ENCODE measurements at regions of chr3 and their contacts with region 1.

Region 1: GRCh38 chr3:20511863-20512505 is 326.0 kb upstream of the SGO1 start:
- DNase-seq: peak; percentile 51
- H3K4me3 ChIP-seq: no peak overlapping the region
- H3K27ac ChIP-seq: no peak overlapping the region
- H3K4me1 ChIP-seq: no peaks in the 10 kb centered on the region
- H3K27me3 ChIP-seq: no peaks in the 10 kb centered on the region
- CTCF ChIP-seq: peak; percentile 35 to 40
- POLR2A ChIP-seq: no peak

Region 2: DNA sequence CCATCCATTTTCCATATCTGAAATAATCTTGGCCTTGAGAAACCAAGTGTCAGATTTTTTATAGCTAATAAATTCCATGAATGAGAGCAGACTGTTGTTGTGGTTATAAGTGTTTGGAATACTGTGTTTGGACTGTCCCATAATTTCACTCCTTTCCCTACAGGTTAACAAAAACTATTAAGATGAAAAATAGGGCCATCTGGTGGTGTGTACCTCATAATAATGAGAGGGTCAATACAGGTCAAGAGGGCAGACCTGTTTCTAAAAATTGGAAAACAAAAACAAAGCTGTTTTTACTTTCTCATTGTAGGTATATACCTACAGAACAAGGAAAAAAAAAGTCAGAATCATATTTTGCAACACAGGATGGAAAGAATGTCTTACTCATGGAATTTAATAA is 227.8 kb after region 1 on chr3:
- CTCF ChIA-PET with region 1: interaction called, 3 read pairs
- POLR2A ChIA-PET with region 1: no interaction called
- dilution Hi-C with region 1: no loop called
- intact Hi-C with region 1: loop called (anchors 5 kb)
- DNase-seq: peak; percentile 1
- H3K4me3 ChIP-seq: no peak overlapping the region
- H3K27ac ChIP-seq: no peak overlapping the region
- H3K4me1 ChIP-seq: no peaks in the 10 kb centered on the region
- H3K27me3 ChIP-seq: no peaks in the 10 kb centered on the region
- CTCF ChIP-seq: no peak
- POLR2A ChIP-seq: no peak

Region 3: DNA sequence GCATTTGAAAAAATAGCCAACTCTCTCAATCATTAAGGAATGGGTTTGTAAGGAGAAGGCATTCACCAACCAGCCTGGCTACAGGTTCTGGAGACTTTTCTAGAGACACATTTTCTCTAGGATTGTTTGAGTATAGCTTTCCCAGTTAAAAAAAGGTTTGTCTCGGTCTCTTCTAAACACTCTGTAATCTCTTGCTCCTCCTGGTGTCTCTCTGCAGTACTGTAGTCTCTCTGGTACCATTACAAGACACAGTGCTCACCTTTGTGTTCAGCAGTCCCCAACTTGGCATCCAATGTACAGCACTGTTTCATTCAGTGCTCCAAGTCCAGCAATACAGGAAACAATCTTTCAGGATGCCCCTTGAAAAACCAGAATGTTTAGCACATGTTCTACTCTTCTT is 704.6 kb after region 1 on chr3:
- CTCF ChIA-PET with region 1: no interaction called
- POLR2A ChIA-PET with region 1: no interaction called
- dilution Hi-C with region 1: no loop called
- intact Hi-C with region 1: loop called (anchors 5 kb)
- DNase-seq: no peak
- H3K4me3 ChIP-seq: no peak overlapping the region
- H3K27ac ChIP-seq: no peak overlapping the region
- H3K4me1 ChIP-seq: no peaks in the 10 kb centered on the region
- H3K27me3 ChIP-seq: no peaks in the 10 kb centered on the region
- CTCF ChIP-seq: no peak
- POLR2A ChIP-seq: no peak

Region 4: GRCh38 chr3:21484057-21484827 is 972.3 kb after region 1 on chr3:
- CTCF ChIA-PET with region 1: interaction called, 6 read pairs
- POLR2A ChIA-PET with region 1: no interaction called
- dilution Hi-C with region 1: no loop called
- intact Hi-C with region 1: loop called (anchors 1 kb)
- DNase-seq: peak; percentile 61
- H3K4me3 ChIP-seq: no peak overlapping the region
- H3K27ac ChIP-seq: no peak overlapping the region
- H3K4me1 ChIP-seq: no peaks in the 10 kb centered on the region
- H3K27me3 ChIP-seq: no peaks in the 10 kb centered on the region
- CTCF ChIP-seq: peak; percentile 55 to 61
- POLR2A ChIP-seq: no peak

Measured in endothelial cell of umbilical vein (primary cell).